Caco-2 (cell line): ENCODE measurements at regions of chr1 and their contacts with region 1.

Region 1: DNA sequence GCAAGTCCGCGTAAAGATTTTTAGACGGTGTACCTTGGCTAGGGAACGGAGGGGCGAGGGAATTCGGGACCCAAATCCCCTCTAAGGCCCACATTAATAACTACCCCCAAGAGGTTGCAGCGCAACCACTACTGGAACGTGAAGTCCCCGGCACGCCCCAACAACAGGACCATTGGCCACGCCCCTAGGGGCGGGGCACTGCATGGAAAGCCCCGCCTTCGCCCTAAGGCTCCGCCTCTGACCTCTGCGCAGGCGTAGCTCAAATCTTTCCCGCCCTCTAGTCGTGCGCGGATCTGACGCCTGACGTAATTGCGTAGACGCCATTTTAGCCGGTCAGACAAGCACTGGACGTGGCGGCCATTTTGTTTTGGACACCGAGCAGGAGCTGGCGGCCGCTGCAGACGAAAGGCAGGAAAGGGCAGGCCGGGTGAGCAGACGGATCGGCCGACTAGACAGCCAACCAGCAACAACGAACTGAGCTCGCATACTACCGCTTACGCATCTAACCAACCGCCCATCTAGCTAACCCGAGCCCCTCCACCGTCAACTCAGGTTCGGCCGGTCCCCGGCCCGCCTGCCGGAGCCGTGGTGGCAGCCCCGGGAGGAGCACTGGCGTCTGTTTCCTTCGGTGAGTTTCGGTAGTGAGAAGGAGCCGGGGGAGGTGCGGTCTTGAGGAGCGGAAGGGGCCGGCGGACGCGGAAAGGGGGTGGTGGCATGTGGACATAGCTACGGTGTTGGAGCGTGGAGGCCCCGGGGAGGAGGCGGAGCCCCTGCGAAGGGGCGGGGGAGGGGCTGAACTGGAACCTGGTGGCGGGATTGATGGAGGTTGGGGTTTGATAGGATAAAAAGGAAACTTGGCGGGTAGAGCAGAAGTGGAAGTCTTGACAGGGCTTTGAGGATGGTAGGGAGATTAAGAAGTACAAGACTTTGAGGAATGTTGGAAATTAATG is at the start of gene CHTOP:
- DNase-seq: peak; percentile 95 to 97
- H3K4me3 ChIP-seq: peak within 1 kb of the TSS; percentile 84
- H3K4me3 Mint-ChIP-seq: peak within 1 kb of the TSS; percentile 98
- H3K27ac Mint-ChIP-seq: peak within 1 kb of the TSS; percentile 99
- H3K4me1 ChIP-seq: peaks cover 26% of the 10 kb centered on the region
- H3K4me1 Mint-ChIP-seq: peaks cover 33% of the 10 kb centered on the region
- H3K27me3 ChIP-seq: no peaks in the 10 kb centered on the region
- H3K27me3 Mint-ChIP-seq: no peaks in the 10 kb centered on the region
- CTCF ChIP-seq: no peak
- total RNA-seq, gene CHTOP: 85.1 and 90.6 TPM in 2 replicates

Region 2: GRCh38 chr1:153217212-153217611 is 416.8 kb before region 1 on chr1 and contains the start of gene PRR9:
- CTCF ChIA-PET with region 1: no interaction called
- POLR2A ChIA-PET with region 1: no interaction called
- intact Hi-C with region 1: no loop called
- DNase-seq: no peak
- H3K4me3 ChIP-seq: no peak within 1 kb of the TSS
- H3K4me3 Mint-ChIP-seq: no peak within 1 kb of the TSS
- H3K27ac Mint-ChIP-seq: no peak within 1 kb of the TSS
- H3K4me1 ChIP-seq: no peaks in the 10 kb centered on the region
- H3K4me1 Mint-ChIP-seq: no peaks in the 10 kb centered on the region
- H3K27me3 ChIP-seq: no peaks in the 10 kb centered on the region; the same call in none of the 2 replicates
- H3K27me3 Mint-ChIP-seq: peaks cover 19% of the 10 kb centered on the region
- CTCF ChIP-seq: no peak
- total RNA-seq, gene PRR9: 0.88 TPM in 1 of 2 replicates, not detected in the other

Region 3: DNA sequence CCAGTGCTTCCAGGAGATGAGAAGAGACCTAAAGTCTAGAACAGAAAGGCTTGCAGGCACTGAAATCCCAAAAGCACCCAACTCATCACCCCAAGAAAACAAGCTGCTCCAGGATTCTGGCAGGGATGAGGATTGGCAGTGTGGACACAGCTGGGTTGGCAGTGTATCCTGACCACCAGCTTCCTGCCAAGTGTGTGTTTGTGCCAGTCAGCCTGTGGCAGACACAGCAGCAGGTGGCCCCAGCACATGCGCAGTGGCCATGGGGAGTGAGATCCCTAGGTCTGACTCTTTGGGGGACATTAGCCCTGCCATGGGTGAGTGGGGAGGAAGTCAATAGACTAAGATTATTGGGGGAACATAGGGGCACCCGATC is 15.9 kb after region 1 on chr1:
- CTCF ChIA-PET with region 1: interaction called, 13 read pairs
- POLR2A ChIA-PET with region 1: interaction called, 34 read pairs
- intact Hi-C with region 1: no loop called
- DNase-seq: peak in 1 of 2 experiments; percentile 25
- H3K4me3 ChIP-seq: no peak overlapping the region
- H3K4me3 Mint-ChIP-seq: peak overlapping the region; percentile 16
- H3K27ac Mint-ChIP-seq: peak overlapping the region; percentile 48
- H3K4me1 ChIP-seq: peaks cover 32% of the 10 kb centered on the region
- H3K4me1 Mint-ChIP-seq: peaks cover 31% of the 10 kb centered on the region
- H3K27me3 ChIP-seq: no peaks in the 10 kb centered on the region
- H3K27me3 Mint-ChIP-seq: no peaks in the 10 kb centered on the region
- CTCF ChIP-seq: no peak

Region 4: GRCh38 chr1:153742411-153743142 is 108.6 kb after region 1 on chr1:
- CTCF ChIA-PET with region 1: no interaction called
- POLR2A ChIA-PET with region 1: interaction called, 3 read pairs
- intact Hi-C with region 1: loop called (anchors 5 kb)
- DNase-seq: peak; percentile 77 to 78
- H3K4me3 ChIP-seq: no peak overlapping the region
- H3K4me3 Mint-ChIP-seq: peak overlapping the region; percentile 44
- H3K27ac Mint-ChIP-seq: peak overlapping the region; percentile 89
- H3K4me1 ChIP-seq: peaks cover 33% of the 10 kb centered on the region
- H3K4me1 Mint-ChIP-seq: peaks cover 33% of the 10 kb centered on the region
- H3K27me3 ChIP-seq: no peaks in the 10 kb centered on the region
- H3K27me3 Mint-ChIP-seq: no peaks in the 10 kb centered on the region
- CTCF ChIP-seq: no peak